ENCODE measurements at regions of chr18 and their contacts with region 1.

Region 1: GRCh38 chr18:63994783-63995399 is 25.0 kb downstream of the SERPINB8 start:
- DNase-seq: peak; percentile 72
- H3K4me3 ChIP-seq: no peak overlapping the region
- H3K27ac ChIP-seq: no peak overlapping the region
- H3K4me1 ChIP-seq: peaks cover 0 to 3% of the 10 kb centered on the region in 2 experiments; a peak in 1 of 4 replicates
- H3K27me3 ChIP-seq: no peaks in the 10 kb centered on the region
- CTCF ChIP-seq: peak; percentile 84
- EP300 ChIP-seq: no peak
- RAD21 ChIP-seq: peak; percentile 70

Region 2: DNA sequence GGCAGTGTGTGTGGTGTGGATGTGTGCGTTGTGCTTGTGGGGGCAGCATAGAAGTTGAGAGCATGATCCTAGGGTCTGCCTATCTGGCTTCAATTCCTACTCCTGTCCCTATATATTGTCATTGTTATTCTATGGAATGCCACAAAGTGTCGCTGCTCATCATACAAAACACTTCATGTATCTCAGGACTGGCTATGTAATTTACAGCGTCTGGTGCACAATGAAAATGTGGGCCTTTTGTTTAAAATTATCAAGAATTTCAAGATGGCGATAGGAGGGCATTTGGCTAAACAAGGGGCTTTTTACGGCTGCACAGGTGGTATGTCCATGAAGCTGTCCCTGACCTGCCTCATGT is 104.0 kb before region 1 on chr18:
- CTCF ChIA-PET with region 1: interaction called, 11 read pairs
- POLR2A ChIA-PET with region 1: no interaction called
- DNase-seq: peak; percentile 27
- H3K4me3 ChIP-seq: no peak overlapping the region
- H3K27ac ChIP-seq: no peak overlapping the region
- H3K4me1 ChIP-seq: no peaks in the 10 kb centered on the region
- H3K27me3 ChIP-seq: peaks cover 11% of the 10 kb centered on the region; the same call in 1 of the 2 replicates
- CTCF ChIP-seq: peak; percentile 46
- EP300 ChIP-seq: no peak
- RAD21 ChIP-seq: peak; percentile 65

Region 3: DNA sequence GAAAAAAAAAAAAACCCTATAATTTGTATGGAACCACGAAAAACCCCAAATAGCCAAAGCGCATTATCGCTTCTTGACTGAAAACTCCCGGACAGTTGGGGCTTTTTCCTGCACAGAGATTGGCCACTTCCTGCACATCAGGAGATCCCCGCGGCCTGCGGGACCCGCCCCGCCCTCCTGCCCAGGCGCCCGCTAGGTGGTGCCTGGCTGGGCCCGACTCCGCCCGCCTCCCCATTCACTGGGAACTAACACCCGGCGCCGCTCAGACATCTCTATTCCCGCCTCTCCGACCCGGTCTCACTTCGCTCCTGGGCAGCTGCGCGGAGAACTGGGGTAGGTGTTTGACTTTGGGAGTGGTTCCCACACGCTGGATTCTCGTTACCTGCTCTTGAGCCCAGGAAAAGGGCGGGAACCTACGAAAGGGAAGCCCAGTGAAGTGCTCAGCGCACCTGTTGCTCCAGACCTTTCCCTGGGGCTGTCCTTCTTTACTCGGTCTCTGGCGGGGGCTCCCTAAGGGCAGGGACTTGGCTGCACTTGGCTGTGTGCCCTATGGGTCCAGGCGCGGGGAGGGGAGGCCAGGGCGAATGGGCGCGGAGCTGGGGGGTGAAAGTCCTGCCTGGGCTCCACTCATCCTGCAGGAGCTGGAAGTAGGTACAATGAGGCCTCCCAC is 45.7 kb before region 1 on chr18 and contains the start of gene HMSD:
- CTCF ChIA-PET with region 1: interaction called, 11 read pairs
- POLR2A ChIA-PET with region 1: no interaction called
- DNase-seq: peak; percentile 56
- H3K4me3 ChIP-seq: no peak within 1 kb of the TSS
- H3K27ac ChIP-seq: no peak within 1 kb of the TSS
- H3K4me1 ChIP-seq: no peaks in the 10 kb centered on the region; a peak in 1 of 4 replicates
- H3K27me3 ChIP-seq: peaks cover 2% of the 10 kb centered on the region; the same call in 1 of the 2 replicates
- CTCF ChIP-seq: peak; percentile 17; the same call in 1 of the 2 replicates
- EP300 ChIP-seq: no peak
- RAD21 ChIP-seq: no peak
- polyA plus RNA-seq, gene HMSD: not detected in 2 replicates

Region 4: GRCh38 chr18:63963615-63964256 is 31.2 kb before region 1 on chr18:
- CTCF ChIA-PET with region 1: interaction called, 17 read pairs
- POLR2A ChIA-PET with region 1: no interaction called
- DNase-seq: peak; percentile 15
- H3K4me3 ChIP-seq: no peak overlapping the region
- H3K27ac ChIP-seq: no peak overlapping the region
- H3K4me1 ChIP-seq: no peaks in the 10 kb centered on the region
- H3K27me3 ChIP-seq: peaks cover 12% of the 10 kb centered on the region; the same call in 1 of the 2 replicates
- CTCF ChIP-seq: peak; percentile 84
- EP300 ChIP-seq: no peak
- RAD21 ChIP-seq: peak; percentile 70

Region 5: GRCh38 chr18:63979409-63979920 is 15.4 kb before region 1 on chr18:
- CTCF ChIA-PET with region 1: interaction called, 20 read pairs
- POLR2A ChIA-PET with region 1: no interaction called
- DNase-seq: peak; percentile 64
- H3K4me3 ChIP-seq: peak overlapping the region in 1 of 2 experiments; percentile 40; a peak in 3 of 4 replicates
- H3K27ac ChIP-seq: no peak overlapping the region
- H3K4me1 ChIP-seq: no peaks in the 10 kb centered on the region; a peak in 2 of 4 replicates
- H3K27me3 ChIP-seq: no peaks in the 10 kb centered on the region
- CTCF ChIP-seq: peak; percentile 97
- EP300 ChIP-seq: no peak
- RAD21 ChIP-seq: peak; percentile 75

Region 6: GRCh38 chr18:64009305-64009704 is 14.4 kb after region 1 on chr18:
- CTCF ChIA-PET with region 1: interaction called, 14 read pairs
- POLR2A ChIA-PET with region 1: no interaction called
- DNase-seq: no peak
- H3K4me3 ChIP-seq: no peak overlapping the region
- H3K27ac ChIP-seq: no peak overlapping the region
- H3K4me1 ChIP-seq: no peaks in the 10 kb centered on the region
- H3K27me3 ChIP-seq: no peaks in the 10 kb centered on the region
- CTCF ChIP-seq: no peak
- EP300 ChIP-seq: no peak
- RAD21 ChIP-seq: no peak

Measured in SK-N-SH (cell line).